AG04449 (cell line): ENCODE measurements at regions of chr1 and their contacts with region 1.

Region 1: GRCh38 chr1:28581536-28582247 is 10.4 kb upstream of the RAB42 start:
- DNase-seq: peak; percentile 61
- H3K4me3 ChIP-seq: peak overlapping the region; percentile 93
- CTCF ChIP-seq: no peak

Region 2: GRCh38 chr1:28518000-28518744 is 63.5 kb before region 1 on chr1:
- CTCF ChIA-PET with region 1: no interaction called
- POLR2A ChIA-PET with region 1: interaction called, 11 read pairs
- DNase-seq: no peak
- H3K4me3 ChIP-seq: peak overlapping the region; percentile 75
- CTCF ChIP-seq: peak; percentile 87

Region 3: GRCh38 chr1:28552758-28553663 is 28.7 kb before region 1 on chr1 and contains the start of gene TRNAU1AP:
- CTCF ChIA-PET with region 1: interaction called, 3 read pairs
- POLR2A ChIA-PET with region 1: interaction called, 57 read pairs
- DNase-seq: peak; percentile 74
- H3K4me3 ChIP-seq: peak within 1 kb of the TSS; percentile 91
- CTCF ChIP-seq: no peak

Region 4: GRCh38 chr1:28591708-28592320 is 10.1 kb after region 1 on chr1 and contains the start of gene RAB42:
- CTCF ChIA-PET with region 1: interaction called, 5 read pairs
- POLR2A ChIA-PET with region 1: interaction called, 18 read pairs
- DNase-seq: no peak
- H3K4me3 ChIP-seq: peak within 1 kb of the TSS; percentile 63
- CTCF ChIP-seq: no peak

Region 5: DNA sequence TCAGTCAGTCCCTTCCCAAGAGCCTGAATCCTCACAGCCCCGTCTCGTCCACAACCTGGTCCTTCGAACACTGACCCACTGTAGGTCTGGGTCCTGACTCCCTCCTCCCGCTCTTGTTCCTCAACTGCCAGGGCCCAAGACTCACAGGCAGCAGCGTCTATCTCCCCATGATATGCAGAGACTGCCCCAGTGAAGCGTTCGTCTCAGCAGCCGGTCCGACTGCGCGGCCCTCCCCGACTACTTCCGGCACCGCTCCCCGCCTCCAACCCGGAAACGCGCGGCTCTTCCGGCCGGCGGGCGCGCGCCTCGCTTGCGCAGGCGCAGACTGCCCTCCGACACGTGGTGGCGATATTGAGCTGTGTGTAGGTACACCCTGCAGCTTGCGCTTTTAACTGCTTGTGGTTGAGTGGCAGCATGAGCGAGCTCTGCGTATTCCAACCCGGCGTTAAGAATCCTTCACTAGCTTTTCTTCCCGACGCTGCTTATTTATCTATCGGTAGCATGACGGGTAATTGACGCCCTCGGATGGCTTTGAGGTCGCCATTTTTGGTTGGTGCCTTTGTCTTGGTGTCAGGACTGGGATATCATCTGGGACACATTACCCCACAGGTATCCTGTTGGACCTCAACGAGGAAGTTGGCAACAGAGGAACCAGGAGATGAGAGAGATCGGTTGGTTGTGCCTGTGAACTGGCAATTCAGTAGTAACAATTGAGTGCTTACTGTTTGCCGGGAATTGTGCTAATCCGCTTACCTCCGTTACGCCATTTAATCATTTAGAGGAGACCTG is 61.3 kb after region 1 on chr1 and contains the start of gene TAF12:
- CTCF ChIA-PET with region 1: interaction called, 3 read pairs
- POLR2A ChIA-PET with region 1: interaction called, 18 read pairs
- DNase-seq: peak; percentile 60
- H3K4me3 ChIP-seq: peak within 1 kb of the TSS; percentile 97
- CTCF ChIP-seq: peak; percentile 39

Region 6: DNA sequence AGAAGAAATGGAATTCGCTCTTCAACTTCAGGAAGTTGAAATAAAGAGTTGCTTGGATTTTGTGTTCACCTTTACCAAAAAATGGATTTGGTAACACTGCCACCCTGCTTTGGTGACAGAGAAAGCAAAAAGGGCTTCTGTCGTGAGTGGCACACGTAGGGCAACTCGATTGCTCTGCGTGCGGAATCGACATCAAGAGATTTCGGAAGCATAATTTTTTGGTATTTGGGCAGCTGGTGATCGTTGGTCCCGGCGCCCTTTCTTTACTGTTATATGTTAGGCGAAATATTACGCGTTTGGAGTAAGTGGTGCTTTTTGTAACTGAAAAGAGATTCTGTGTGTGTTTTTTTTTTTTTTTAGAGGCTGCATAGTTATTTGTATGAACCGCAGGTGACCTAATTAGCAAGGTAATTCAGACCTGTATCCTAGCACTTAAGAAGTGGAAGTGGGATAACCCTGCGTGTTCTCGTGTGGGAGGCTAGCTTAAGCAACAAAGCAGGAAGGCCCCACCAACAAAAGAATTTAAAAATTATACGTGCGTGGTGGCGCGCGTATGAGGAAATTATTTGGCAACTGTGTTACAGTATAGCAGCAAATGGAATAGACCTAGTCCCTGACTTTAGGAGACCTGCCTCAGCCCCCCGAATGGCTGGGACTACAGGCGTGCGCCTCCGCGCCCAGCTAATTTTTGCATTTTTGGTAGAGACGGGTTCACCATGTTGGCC is 66.9 kb after region 1 on chr1 and contains the start of gene RNU11:
- CTCF ChIA-PET with region 1: no interaction called
- POLR2A ChIA-PET with region 1: interaction called, 18 read pairs
- DNase-seq: peak; percentile 95
- H3K4me3 ChIP-seq: peak within 1 kb of the TSS; percentile 57
- CTCF ChIP-seq: no peak